ENCODE measurements at regions of chr11 and their contacts with region 1.

Region 1: DNA sequence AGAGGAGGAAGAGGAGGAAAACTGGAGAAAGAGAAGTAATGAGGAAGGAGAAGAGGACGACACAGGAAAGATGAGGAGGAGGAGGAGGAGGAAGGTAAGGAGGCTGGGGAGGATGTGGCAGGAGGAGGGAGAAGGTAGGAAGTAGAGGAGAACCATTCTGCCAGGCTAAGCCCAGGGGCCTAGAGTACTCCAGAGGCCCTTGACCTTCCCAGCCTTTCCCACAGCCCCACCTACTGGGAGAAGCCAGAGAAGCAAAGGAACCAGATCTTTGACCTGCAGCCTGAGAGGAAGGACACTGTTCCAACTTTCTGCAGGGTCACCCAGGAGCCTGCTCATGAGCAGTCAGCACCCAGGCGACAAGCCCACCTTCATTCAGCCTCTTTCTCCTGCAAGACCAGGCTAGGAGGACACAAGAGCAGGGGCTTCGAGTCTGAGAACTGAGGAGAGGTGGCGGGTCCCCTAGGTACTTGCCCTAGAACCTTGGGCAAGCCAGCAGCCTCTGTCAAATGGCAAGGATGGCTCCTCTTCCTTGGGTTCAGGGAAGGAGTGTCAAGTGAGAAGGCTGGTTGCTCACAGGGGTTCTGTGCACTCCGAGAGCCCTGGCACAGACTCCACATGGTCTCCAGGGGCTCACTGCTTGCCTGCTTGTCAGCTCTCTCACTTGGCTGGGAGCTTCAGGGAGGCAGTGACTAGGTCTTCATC is 27.9 kb upstream of the OAF start:
- DNase-seq: peak; percentile 81 to 83
- H3K4me3 ChIP-seq: no peak overlapping the region
- H3K4me3 Mint-ChIP-seq: no peak overlapping the region
- H3K27ac Mint-ChIP-seq: no peak overlapping the region
- H3K4me1 ChIP-seq: peaks cover 53% of the 10 kb centered on the region
- H3K4me1 Mint-ChIP-seq: peaks cover 44% of the 10 kb centered on the region
- H3K27me3 ChIP-seq: no peaks in the 10 kb centered on the region
- H3K27me3 Mint-ChIP-seq: no peaks in the 10 kb centered on the region
- CTCF ChIP-seq: peak; percentile 72 to 92

Region 2: GRCh38 chr11:120172054-120172911 is 10.7 kb before region 1 on chr11:
- CTCF ChIA-PET with region 1: interaction called, 8 read pairs
- POLR2A ChIA-PET with region 1: no interaction called
- intact Hi-C with region 1: loop called (anchors 1 kb)
- DNase-seq: peak; percentile 87 to 88
- H3K4me3 ChIP-seq: no peak overlapping the region
- H3K4me3 Mint-ChIP-seq: no peak overlapping the region
- H3K27ac Mint-ChIP-seq: no peak overlapping the region
- H3K4me1 ChIP-seq: peaks cover 8% of the 10 kb centered on the region
- H3K4me1 Mint-ChIP-seq: no peaks in the 10 kb centered on the region
- H3K27me3 ChIP-seq: no peaks in the 10 kb centered on the region
- H3K27me3 Mint-ChIP-seq: peaks cover 9% of the 10 kb centered on the region
- CTCF ChIP-seq: peak; percentile 95 to 98

Region 3: GRCh38 chr11:120210626-120211521 is 27.9 kb after region 1 on chr11 and contains the start of gene OAF:
- CTCF ChIA-PET with region 1: interaction called, 3 read pairs
- POLR2A ChIA-PET with region 1: no interaction called
- intact Hi-C with region 1: loop called (anchors 1 kb)
- DNase-seq: peak; percentile 92
- H3K4me3 ChIP-seq: peak within 1 kb of the TSS; percentile 93
- H3K4me3 Mint-ChIP-seq: peak within 1 kb of the TSS; percentile 85
- H3K27ac Mint-ChIP-seq: peak within 1 kb of the TSS; percentile 84
- H3K4me1 ChIP-seq: peaks cover 30% of the 10 kb centered on the region
- H3K4me1 Mint-ChIP-seq: peaks cover 25% of the 10 kb centered on the region
- H3K27me3 ChIP-seq: no peaks in the 10 kb centered on the region
- H3K27me3 Mint-ChIP-seq: no peaks in the 10 kb centered on the region
- CTCF ChIP-seq: peak in 1 of 2 experiments; percentile 21
- total RNA-seq, gene OAF: 30.3 and 31.3 TPM in 2 replicates

Region 4: GRCh38 chr11:120229451-120230424 is 46.8 kb after region 1 on chr11:
- CTCF ChIA-PET with region 1: interaction called, 13 read pairs
- POLR2A ChIA-PET with region 1: no interaction called
- intact Hi-C with region 1: loop called (anchors 1 kb)
- DNase-seq: peak in 1 of 2 experiments; percentile 67
- H3K4me3 ChIP-seq: no peak overlapping the region
- H3K4me3 Mint-ChIP-seq: no peak overlapping the region
- H3K27ac Mint-ChIP-seq: no peak overlapping the region
- H3K4me1 ChIP-seq: no peaks in the 10 kb centered on the region
- H3K4me1 Mint-ChIP-seq: no peaks in the 10 kb centered on the region
- H3K27me3 ChIP-seq: peaks cover 3% of the 10 kb centered on the region; the same call in 1 of the 2 replicates
- H3K27me3 Mint-ChIP-seq: peaks cover 4% of the 10 kb centered on the region
- CTCF ChIP-seq: peak; percentile 88 to 91